ENCODE measurements at regions of chr7 and their contacts with region 1.

Region 1: GRCh38 chr7:67484244-67484751 is 487.7 kb downstream of the TYW1 start:
- DNase-seq: peak; percentile 81
- H3K4me3 ChIP-seq: peak overlapping the region; percentile 21
- H3K27ac ChIP-seq: no peak overlapping the region
- H3K4me1 ChIP-seq: peaks cover 7% of the 10 kb centered on the region
- H3K27me3 ChIP-seq: no peaks in the 10 kb centered on the region
- CTCF ChIP-seq: peak; percentile 85

Region 2: DNA sequence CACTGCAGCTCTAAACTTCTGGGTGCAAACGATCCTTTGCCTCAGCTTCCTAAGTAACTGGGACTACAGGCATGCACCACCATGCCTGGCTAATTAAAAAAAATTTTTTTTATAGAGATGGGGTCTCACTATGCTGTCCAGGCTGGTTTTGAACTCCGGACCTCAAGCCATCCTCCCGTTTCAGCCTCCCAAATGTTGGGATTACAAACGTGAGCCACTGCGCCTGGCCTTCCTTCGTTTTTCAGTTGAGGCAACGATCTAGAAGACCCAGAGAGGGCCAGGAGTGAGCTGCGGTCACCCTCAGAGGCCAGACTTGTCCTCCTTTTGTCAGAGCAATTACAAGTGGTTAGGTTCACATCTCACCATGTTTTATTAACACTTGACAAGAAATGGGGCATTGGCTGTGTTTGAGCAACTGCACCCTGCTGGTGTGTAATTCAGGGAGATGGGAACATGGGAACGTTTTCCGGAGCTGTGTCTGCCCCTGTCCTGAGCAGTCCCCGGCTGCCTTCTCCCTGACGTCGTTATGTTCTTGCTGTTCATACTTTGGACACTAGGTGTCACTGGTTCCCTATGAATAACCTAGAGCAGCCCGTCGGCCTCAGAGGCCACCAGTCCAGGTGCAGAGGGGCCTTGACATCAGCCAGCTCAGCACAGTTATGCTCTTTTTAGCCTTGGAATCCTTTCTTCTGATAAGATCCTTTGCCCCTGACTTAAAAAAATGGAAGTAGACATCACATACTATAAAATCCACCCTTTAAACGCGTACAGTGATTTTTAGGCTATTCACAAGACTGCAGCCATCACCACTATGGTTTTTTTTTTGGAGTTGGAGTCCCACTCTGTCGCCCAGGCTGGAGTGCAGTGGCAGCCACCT is 112.6 kb before region 1 on chr7:
- CTCF ChIA-PET with region 1: interaction called, 14 read pairs
- POLR2A ChIA-PET with region 1: no interaction called
- intact Hi-C with region 1: loop called (anchors 10 kb)
- DNase-seq: peak; percentile 85
- H3K4me3 ChIP-seq: no peak overlapping the region
- H3K27ac ChIP-seq: no peak overlapping the region
- H3K4me1 ChIP-seq: no peaks in the 10 kb centered on the region
- H3K27me3 ChIP-seq: peaks cover 2% of the 10 kb centered on the region
- CTCF ChIP-seq: peak; percentile 87

Region 3: GRCh38 chr7:67377939-67378862 is 106.1 kb before region 1 on chr7:
- CTCF ChIA-PET with region 1: interaction called, 10 read pairs
- POLR2A ChIA-PET with region 1: no interaction called
- intact Hi-C with region 1: loop called (anchors 10 kb)
- DNase-seq: peak; percentile 91
- H3K4me3 ChIP-seq: no peak overlapping the region
- H3K27ac ChIP-seq: no peak overlapping the region
- H3K4me1 ChIP-seq: peaks cover 4% of the 10 kb centered on the region
- H3K27me3 ChIP-seq: no peaks in the 10 kb centered on the region
- CTCF ChIP-seq: peak; percentile 89

Region 4: GRCh38 chr7:67438198-67438882 is 46.0 kb before region 1 on chr7:
- CTCF ChIA-PET with region 1: interaction called, 10 read pairs
- POLR2A ChIA-PET with region 1: no interaction called
- intact Hi-C with region 1: no loop called
- DNase-seq: no peak
- H3K4me3 ChIP-seq: no peak overlapping the region
- H3K27ac ChIP-seq: no peak overlapping the region
- H3K4me1 ChIP-seq: peaks cover 10% of the 10 kb centered on the region
- H3K27me3 ChIP-seq: no peaks in the 10 kb centered on the region
- CTCF ChIP-seq: no peak